HEK293T (cell line): ENCODE measurements at regions of chr19 and their contacts with region 1.

Region 1: GRCh38 chr19:14059093-14059480 is 2.8 kb downstream of the PALM3 start:
- DNase-seq: peak; percentile 56

Region 2: GRCh38 chr19:13986348-13986904 is 72.7 kb before region 1 on chr19:
- CTCF ChIA-PET with region 1: no interaction called
- POLR2A ChIA-PET with region 1: no interaction called
- DNase-seq: no peak

Region 3: DNA sequence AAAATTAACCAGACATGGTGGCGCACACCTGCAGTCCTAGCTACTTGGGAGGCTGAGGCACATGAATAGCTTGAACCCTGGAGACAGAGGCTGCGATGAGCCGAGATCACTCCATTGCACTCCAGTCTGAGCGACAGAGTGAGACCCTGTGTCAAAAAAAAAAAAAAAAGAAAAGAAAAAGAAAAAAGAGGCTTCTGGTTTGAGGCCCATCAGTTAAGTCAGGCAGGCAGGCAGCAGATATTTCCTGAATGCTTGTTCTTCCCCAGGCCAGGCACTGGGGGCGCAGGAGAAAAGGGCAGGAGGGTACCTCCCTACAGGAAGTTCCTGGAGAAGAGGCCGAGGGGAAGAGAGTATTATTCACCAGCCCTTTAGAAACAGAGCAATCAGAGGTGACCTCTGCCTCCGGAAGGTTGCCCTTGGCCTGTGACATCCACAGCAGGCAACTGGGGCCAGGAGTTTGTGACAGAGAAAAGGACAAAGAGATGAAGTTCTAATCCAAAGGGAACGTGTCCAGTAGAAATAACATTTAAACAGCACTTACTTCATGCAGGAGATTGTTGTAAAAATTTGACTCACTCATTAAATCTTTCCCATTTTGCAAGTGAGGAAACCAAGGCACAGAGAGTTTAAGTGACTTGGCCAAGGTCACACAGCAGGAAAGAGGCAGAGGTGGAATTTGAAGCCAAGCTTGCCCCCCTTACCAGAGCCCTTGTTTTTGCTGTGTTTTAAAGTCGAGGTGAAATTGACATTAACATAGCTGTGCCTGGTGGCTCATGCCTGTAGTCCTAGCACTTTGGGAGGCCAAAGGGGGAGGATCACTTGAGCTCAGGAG is 35.5 kb before region 1 on chr19:
- CTCF ChIA-PET with region 1: no interaction called
- POLR2A ChIA-PET with region 1: no interaction called
- DNase-seq: peak; percentile 62

Region 4: DNA sequence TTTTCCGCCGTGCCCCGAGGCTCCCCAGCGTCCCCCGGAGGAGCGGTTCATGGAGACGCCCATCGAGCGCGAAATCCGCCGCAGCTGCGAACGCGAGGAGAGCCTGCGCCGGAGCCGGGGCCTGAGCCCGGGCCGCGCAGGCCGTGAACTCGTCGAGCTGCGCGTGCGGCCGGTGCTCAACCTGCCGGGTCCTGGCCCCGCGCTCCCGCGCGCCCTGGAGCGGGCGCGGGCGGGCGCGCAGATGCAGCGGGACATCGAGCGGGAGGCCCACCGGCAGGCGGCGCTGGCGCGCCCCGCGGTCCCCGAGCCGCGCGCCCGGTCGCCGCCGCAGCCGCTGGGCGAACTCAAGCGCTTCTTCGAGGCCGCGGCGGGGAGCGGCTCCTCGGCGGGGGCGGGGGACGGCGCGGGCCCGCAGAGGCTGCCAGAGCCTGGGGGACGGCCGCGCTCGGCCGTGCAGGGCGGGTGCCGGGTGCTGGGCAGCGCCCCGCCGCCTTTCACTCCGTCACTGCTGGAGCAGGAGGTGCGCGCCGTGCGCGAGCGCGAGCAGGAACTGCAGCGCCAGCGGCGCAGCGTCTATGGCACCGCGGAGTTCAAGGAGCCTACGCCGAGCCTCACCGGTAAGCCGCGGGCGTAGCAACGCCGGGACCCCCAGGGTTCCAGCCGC is 14.3 kb after region 1 on chr19:
- CTCF ChIA-PET with region 1: interaction called, 13 read pairs
- POLR2A ChIA-PET with region 1: interaction called, 4 read pairs
- DNase-seq: peak; percentile 79